Posterior vena cava (tissue), 2 donors: ENCODE measurements at regions of chr16 and their contacts with region 1.

Region 1: DNA sequence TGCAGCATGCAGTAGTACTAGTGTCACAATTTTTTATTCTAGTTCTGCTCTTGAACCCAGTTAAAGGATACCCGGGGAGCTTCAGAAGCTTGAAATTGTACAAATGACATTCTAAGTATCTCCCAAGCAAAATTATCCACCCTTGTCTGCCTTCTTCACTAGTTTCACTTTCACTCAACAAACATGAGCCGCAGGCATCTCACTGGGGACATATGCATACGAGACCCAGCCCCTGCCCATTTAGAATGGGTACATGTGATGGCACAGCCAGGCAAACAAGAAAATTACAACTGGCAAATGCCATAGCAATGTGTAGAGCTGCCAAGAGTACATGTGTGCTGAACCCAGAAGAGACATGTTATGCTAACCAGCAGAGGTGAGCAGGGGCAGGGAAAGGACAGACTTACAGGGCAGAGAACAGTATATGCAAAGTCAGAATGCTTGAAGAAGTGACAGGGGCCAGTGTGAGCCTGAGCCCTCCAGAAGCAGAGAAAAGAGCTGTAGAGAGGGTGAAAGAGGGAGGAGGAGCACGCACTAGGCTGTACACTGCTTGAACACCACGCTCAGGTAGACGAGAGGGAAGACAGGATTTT is 8.3 kb downstream of the GINS2 start:
- DNase-seq: no peak

Region 2: GRCh38 chr16:85704900-85705846 is 24.7 kb after region 1 on chr16:
- intact Hi-C with region 1: loop called in 1 of 2 experiments (anchors 1 kb)
- DNase-seq: no peak

Region 3: DNA sequence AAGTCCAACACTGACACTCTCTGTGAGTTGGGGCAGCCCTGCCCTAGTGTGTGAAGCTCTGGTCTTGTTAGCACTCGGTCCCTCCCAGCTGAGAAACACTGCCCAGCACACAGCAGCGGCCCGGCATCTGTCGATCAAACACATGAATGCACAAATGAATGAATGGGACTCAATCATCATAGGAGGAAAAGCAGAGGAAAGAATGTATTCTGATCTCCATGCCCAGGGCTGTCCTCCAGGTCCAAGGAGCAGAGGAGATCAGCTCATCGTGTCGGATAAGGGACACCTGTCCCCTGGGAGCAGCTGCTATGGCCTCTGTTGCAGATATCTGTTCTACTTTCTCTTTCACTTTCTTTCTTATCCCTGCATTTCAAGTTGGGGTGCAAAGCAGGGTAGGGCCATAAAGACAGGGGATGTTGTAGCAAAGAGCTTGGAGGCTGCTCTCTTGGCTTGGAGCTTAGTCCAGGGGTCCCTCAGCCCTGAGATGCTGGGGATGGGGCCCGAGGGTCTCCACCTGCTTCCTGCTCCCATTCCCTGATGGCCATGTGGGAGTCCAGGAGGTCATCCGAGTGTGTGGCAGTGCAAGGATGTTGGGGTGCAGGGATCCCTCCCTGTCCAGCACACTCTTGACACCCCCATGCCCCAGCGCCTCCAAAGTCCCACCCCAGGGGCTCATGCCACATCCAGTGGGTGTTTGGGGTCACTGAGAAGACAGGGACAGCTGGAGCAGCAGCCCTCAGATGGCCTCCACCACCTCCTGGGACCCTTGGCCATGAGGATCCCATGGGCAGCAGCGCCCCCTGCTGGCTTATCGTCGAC is 306.7 kb after region 1 on chr16:
- intact Hi-C with region 1: no loop called
- DNase-seq: peak; percentile 73